ENCODE measurements at regions of chr6 and their contacts with region 1.

Region 1: GRCh38 chr6:85923013-85923430 is 280.3 kb upstream of the SYNCRIP start:
- DNase-seq: peak; percentile 13
- ATAC-seq: peak; percentile 91
- H3K4me3 ChIP-seq: no peak overlapping the region
- H3K27ac ChIP-seq: no peak overlapping the region
- H3K4me1 ChIP-seq: no peaks in the 10 kb centered on the region
- H3K27me3 ChIP-seq: no peaks in the 10 kb centered on the region
- CTCF ChIP-seq: peak; percentile 69 to 82 (median 73)
- EP300 ChIP-seq: no peak
- POLR2A ChIP-seq: no peak
- RAD21 ChIP-seq: peak; percentile 90

Region 2: GRCh38 chr6:85660181-85660611 is 262.8 kb before region 1 on chr6:
- CTCF ChIA-PET with region 1: no interaction called
- POLR2A ChIA-PET with region 1: no interaction called
- RAD21 ChIA-PET with region 1: no interaction called
- SMC1A ChIA-PET with region 1: no interaction called
- in situ Hi-C with region 1: no loop called
- intact Hi-C with region 1: no loop called
- DNase-seq: no peak
- ATAC-seq: no peak
- H3K4me3 ChIP-seq: no peak overlapping the region
- H3K27ac ChIP-seq: no peak overlapping the region
- H3K4me1 ChIP-seq: no peaks in the 10 kb centered on the region
- H3K27me3 ChIP-seq: no peaks in the 10 kb centered on the region
- CTCF ChIP-seq: 0 out of 6 replicates have a peak, but pooled peaks of 1 of the 3 experiments have one; percentile 2
- EP300 ChIP-seq: no peak
- POLR2A ChIP-seq: no peak
- RAD21 ChIP-seq: no peak

Region 3: GRCh38 chr6:85912582-85912981 is 10.4 kb before region 1 on chr6:
- CTCF ChIA-PET with region 1: interaction called, 11 read pairs
- POLR2A ChIA-PET with region 1: no interaction called
- RAD21 ChIA-PET with region 1: no interaction called
- SMC1A ChIA-PET with region 1: interaction called, 5 read pairs
- in situ Hi-C with region 1: no loop called
- intact Hi-C with region 1: no loop called
- DNase-seq: no peak
- ATAC-seq: no peak
- H3K4me3 ChIP-seq: no peak overlapping the region
- H3K27ac ChIP-seq: no peak overlapping the region
- H3K4me1 ChIP-seq: no peaks in the 10 kb centered on the region
- H3K27me3 ChIP-seq: no peaks in the 10 kb centered on the region
- CTCF ChIP-seq: no peak
- EP300 ChIP-seq: no peak
- POLR2A ChIP-seq: no peak
- RAD21 ChIP-seq: no peak

Region 4: GRCh38 chr6:86192123-86192522 is 269.1 kb after region 1 on chr6:
- CTCF ChIA-PET with region 1: interaction called, 16 read pairs
- POLR2A ChIA-PET with region 1: no interaction called
- RAD21 ChIA-PET with region 1: interaction called, 3 read pairs
- SMC1A ChIA-PET with region 1: interaction called, 4 read pairs
- in situ Hi-C with region 1: loop called (anchors 10 kb)
- intact Hi-C with region 1: loop called (anchors 5 kb)
- DNase-seq: no peak
- ATAC-seq: peak; percentile 91
- H3K4me3 ChIP-seq: no peak overlapping the region
- H3K27ac ChIP-seq: no peak overlapping the region
- H3K4me1 ChIP-seq: no peaks in the 10 kb centered on the region
- H3K27me3 ChIP-seq: no peaks in the 10 kb centered on the region
- CTCF ChIP-seq: peak; percentile 25 to 45 (median 34); a peak in 3 of 6 replicates
- EP300 ChIP-seq: no peak
- POLR2A ChIP-seq: no peak
- RAD21 ChIP-seq: 0 out of 2 replicates have a peak, but pooled peaks have one; percentile 22

Region 5: GRCh38 chr6:86856937-86857563 is 934.0 kb after region 1 on chr6:
- CTCF ChIA-PET with region 1: interaction called, 11 read pairs
- POLR2A ChIA-PET with region 1: no interaction called
- RAD21 ChIA-PET with region 1: interaction called, 9 read pairs
- SMC1A ChIA-PET with region 1: interaction called, 3 read pairs
- in situ Hi-C with region 1: loop called (anchors 10 kb)
- intact Hi-C with region 1: loop called (anchors 2 kb)
- DNase-seq: no peak
- ATAC-seq: peak; percentile 67
- H3K4me3 ChIP-seq: no peak overlapping the region
- H3K27ac ChIP-seq: no peak overlapping the region
- H3K4me1 ChIP-seq: no peaks in the 10 kb centered on the region
- H3K27me3 ChIP-seq: no peaks in the 10 kb centered on the region
- CTCF ChIP-seq: peak; percentile 63 to 77 (median 67)
- EP300 ChIP-seq: no peak
- POLR2A ChIP-seq: no peak
- RAD21 ChIP-seq: peak; percentile 59

Region 6: GRCh38 chr6:86937219-86938079 is 1014.4 kb after region 1 on chr6 and contains the start of gene HTR1E:
- CTCF ChIA-PET with region 1: interaction called, 3 read pairs
- POLR2A ChIA-PET with region 1: no interaction called
- RAD21 ChIA-PET with region 1: no interaction called
- SMC1A ChIA-PET with region 1: no interaction called
- in situ Hi-C with region 1: no loop called
- intact Hi-C with region 1: loop called (anchors 5 kb)
- DNase-seq: no peak
- ATAC-seq: peak; percentile 89
- H3K4me3 ChIP-seq: no peak within 1 kb of the TSS
- H3K27ac ChIP-seq: no peak within 1 kb of the TSS
- H3K4me1 ChIP-seq: no peaks in the 10 kb centered on the region
- H3K27me3 ChIP-seq: peaks cover 4% of the 10 kb centered on the region in 2 experiments; a peak in 3 of 4 replicates
- CTCF ChIP-seq: peak; percentile 51 to 63 (median 52)
- EP300 ChIP-seq: no peak
- POLR2A ChIP-seq: no peak
- RAD21 ChIP-seq: peak; percentile 61
- polyA plus RNA-seq, gene HTR1E: not detected

Region 7: DNA sequence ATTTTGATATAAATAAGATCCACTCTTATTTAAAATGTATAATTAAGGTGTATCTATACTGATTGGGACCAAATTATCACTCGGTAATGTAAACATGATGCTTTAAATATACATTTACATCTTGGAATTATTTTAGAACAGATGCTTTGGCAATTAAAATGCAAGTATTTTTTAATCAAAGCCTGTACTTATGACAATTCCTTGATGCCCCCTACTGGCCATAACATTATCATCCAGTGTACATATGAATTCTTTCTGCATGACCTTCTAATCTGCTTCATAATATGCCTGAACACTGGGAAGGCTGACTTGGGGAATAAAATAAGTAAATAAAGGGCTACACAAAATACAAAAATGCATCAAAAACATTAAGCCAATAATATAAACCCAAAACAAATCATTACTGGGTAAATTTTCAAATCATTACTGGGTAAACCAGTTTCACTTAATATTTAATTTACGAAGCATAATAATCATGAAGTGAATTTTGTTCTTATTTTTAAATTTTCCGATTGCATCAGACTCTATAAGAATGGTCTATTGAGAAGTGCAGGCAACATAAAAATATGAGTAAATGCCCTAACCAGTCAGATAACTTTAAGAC is 1106.8 kb after region 1 on chr6:
- CTCF ChIA-PET with region 1: no interaction called
- POLR2A ChIA-PET with region 1: no interaction called
- RAD21 ChIA-PET with region 1: no interaction called
- SMC1A ChIA-PET with region 1: no interaction called
- in situ Hi-C with region 1: no loop called
- intact Hi-C with region 1: loop called (anchors 1 kb)
- DNase-seq: no peak
- ATAC-seq: peak; percentile 70
- H3K4me3 ChIP-seq: no peak overlapping the region
- H3K27ac ChIP-seq: no peak overlapping the region
- H3K4me1 ChIP-seq: no peaks in the 10 kb centered on the region
- H3K27me3 ChIP-seq: peaks cover 0 to 5% of the 10 kb centered on the region in 2 experiments; a peak in 2 of 4 replicates
- CTCF ChIP-seq: peak; percentile 50 to 56 (median 51)
- EP300 ChIP-seq: no peak
- POLR2A ChIP-seq: no peak
- RAD21 ChIP-seq: peak; percentile 48